Sigmoid colon (tissue), 7 donors: ENCODE measurements at regions of chr1 and their contacts with region 1.

Region 1: DNA sequence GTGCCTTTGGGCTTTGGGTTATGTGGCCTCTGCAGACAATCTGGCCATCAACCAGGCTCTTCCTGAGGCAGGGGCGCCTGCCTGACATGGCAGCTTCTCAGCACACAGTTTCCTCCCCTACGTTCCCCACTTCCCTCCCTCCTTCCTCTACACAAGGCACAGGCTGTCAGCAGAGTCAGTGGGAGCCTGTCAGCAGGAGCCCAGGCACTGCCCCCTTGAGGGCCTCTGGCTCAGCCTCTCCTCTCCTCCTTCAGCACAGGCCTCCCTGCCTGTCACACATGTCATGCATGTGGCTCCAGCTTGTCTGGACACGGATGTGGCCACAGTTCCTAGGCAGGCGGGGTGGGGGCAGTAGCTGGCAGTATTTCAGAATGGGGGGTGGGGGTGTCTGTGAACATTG is 52.2 kb upstream of the ARTN start:
- DNase-seq: no peak
- H3K4me3 ChIP-seq: no peak overlapping the region
- H3K27ac ChIP-seq: no peak overlapping the region
- H3K4me1 ChIP-seq: no peaks in the 10 kb centered on the region
- H3K27me3 ChIP-seq: no peaks in the 10 kb centered on the region
- CTCF ChIP-seq: no peak
- EP300 ChIP-seq: no peak
- POLR2A ChIP-seq: no peak

Region 2: DNA sequence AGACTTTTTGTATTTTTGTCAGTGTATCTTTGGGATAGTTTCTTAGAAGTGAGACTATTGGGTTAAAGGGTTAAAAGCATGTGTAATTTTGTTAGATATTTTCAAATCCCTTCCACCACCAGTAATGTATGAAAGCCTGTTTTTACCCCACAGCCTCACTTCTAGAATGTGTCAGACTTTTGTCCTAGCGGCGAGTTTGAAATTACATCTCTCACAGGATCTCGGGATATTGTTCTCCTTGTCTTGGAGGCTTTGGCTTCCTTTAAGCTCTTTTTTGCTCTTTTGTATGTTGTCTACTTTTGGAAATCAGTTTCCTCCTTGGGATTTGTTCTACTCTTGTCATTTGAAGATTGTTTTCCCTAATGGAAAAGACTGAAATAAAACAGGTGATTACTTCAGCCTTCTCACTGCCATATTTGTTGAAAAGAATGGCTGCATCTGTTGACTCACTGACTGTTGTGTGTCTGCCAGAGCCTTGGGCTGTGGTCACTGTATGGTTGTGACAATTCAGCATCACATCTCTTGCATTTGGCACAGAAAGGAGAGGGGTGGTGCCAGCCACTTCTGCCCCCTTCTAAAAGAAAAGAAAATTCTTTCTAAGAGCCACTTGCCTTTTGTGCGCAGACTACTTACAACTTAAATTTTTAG is 151.5 kb before region 1 on chr1:
- intact Hi-C with region 1: no loop called
- DNase-seq: no peak
- H3K4me3 ChIP-seq: no peak overlapping the region
- H3K27ac ChIP-seq: no peak overlapping the region
- H3K4me1 ChIP-seq: peaks cover 0 to 3% (median 1%) of the 10 kb centered on the region in 4 donors
- H3K27me3 ChIP-seq: no peaks in the 10 kb centered on the region
- CTCF ChIP-seq: no peak
- EP300 ChIP-seq: no peak
- POLR2A ChIP-seq: no peak

Region 3: DNA sequence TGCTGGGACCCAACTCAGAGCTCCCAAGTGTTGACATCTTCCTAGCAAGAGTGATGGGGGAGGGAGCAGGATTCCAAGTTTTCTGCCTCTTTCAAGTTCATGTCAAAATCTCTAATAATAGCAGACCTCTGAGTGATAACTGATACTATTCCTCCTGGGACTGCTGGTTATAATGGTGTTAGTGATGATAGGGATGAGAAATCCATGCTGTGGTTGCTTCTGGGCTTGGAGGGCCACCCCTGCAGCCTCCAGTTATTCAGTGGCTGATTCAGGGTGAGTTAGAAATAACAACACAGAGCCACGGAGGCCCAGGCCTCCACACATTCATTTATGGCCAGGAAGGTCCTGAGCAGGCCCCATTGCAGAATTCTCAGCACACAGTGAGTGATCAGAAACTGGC is 11.6 kb after region 1 on chr1:
- intact Hi-C with region 1: loop called (anchors 2 kb)
- DNase-seq: no peak
- H3K4me3 ChIP-seq: no peak overlapping the region
- H3K27ac ChIP-seq: no peak overlapping the region
- H3K4me1 ChIP-seq: no peaks in the 10 kb centered on the region
- H3K27me3 ChIP-seq: no peaks in the 10 kb centered on the region
- CTCF ChIP-seq: no peak
- EP300 ChIP-seq: no peak
- POLR2A ChIP-seq: no peak

Region 4: GRCh38 chr1:44283524-44284173 is 402.2 kb after region 1 on chr1:
- intact Hi-C with region 1: no loop called
- DNase-seq: no peak
- H3K4me3 ChIP-seq: no peak overlapping the region
- H3K27ac ChIP-seq: no peak overlapping the region
- H3K4me1 ChIP-seq: no peaks in the 10 kb centered on the region
- H3K27me3 ChIP-seq: no peaks in the 10 kb centered on the region
- CTCF ChIP-seq: no peak
- EP300 ChIP-seq: no peak
- POLR2A ChIP-seq: no peak